ENCODE measurements at regions of chr3 and their contacts with region 1.

Region 1: GRCh38 chr3:69691860-69692259 is 47.4 kb upstream of the MITF start:
- DNase-seq: no peak
- H3K4me3 Mint-ChIP-seq: no peak overlapping the region
- H3K27ac Mint-ChIP-seq: no peak overlapping the region
- H3K4me1 Mint-ChIP-seq: peaks cover 6% of the 10 kb centered on the region
- H3K27me3 Mint-ChIP-seq: no peaks in the 10 kb centered on the region
- CTCF ChIP-seq: no peak

Region 2: GRCh38 chr3:69739204-69740102 is 47.6 kb after region 1 on chr3 and contains the start of gene MITF:
- CTCF ChIA-PET with region 1: interaction called, 9 read pairs
- POLR2A ChIA-PET with region 1: interaction called, 20 read pairs
- intact Hi-C with region 1: loop called (anchors 1 kb)
- DNase-seq: peak; percentile 93
- H3K4me3 Mint-ChIP-seq: peak within 1 kb of the TSS; percentile 75
- H3K27ac Mint-ChIP-seq: peak within 1 kb of the TSS; percentile 70
- H3K4me1 Mint-ChIP-seq: peaks cover 13% of the 10 kb centered on the region
- H3K27me3 Mint-ChIP-seq: peaks cover 16% of the 10 kb centered on the region
- CTCF ChIP-seq: no peak
- total RNA-seq, gene MITF: 7.4 and 16.1 TPM in 2 replicates

Region 3: DNA sequence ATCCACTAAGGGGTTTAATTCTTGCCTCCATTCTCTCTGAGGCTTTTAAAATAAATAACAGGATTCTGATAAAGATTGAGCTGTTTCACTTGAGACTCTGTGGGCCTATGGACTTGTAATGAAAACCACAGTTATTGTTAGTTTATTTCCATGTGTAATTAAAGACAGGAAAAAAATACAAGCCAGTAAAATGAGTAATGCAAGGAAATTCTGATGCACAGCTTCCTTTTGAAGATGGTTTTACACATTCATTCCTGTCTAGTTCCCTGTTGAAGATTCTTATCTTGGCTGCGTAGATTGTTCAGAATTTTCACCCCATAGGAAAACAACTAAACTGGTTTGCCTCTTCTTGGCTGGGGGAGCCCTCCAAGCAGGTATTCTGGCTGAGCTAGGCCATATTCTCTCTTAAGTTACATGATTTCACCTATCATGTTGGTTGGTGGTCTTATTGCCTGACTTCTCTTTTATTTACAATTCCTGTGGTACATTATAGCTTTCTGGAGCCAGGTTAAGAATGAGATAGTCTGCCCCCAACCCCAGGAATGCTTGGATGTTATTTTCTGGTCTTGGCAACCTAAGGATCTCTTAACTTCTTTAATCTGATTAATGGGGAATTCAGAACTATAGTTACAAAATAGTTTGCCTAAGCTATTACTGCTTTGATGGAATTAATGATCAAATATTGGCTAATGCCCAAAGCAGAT is 115.0 kb after region 1 on chr3:
- CTCF ChIA-PET with region 1: interaction called, 12 read pairs
- POLR2A ChIA-PET with region 1: no interaction called
- intact Hi-C with region 1: no loop called
- DNase-seq: no peak
- H3K4me3 Mint-ChIP-seq: no peak overlapping the region
- H3K27ac Mint-ChIP-seq: no peak overlapping the region
- H3K4me1 Mint-ChIP-seq: peaks cover 6% of the 10 kb centered on the region
- H3K27me3 Mint-ChIP-seq: no peaks in the 10 kb centered on the region
- CTCF ChIP-seq: no peak

Region 4: GRCh38 chr3:69948246-69948862 is 256.5 kb after region 1 on chr3:
- CTCF ChIA-PET with region 1: interaction called, 99 read pairs
- POLR2A ChIA-PET with region 1: no interaction called
- intact Hi-C with region 1: loop called (anchors 1 kb)
- DNase-seq: peak; percentile 59
- H3K4me3 Mint-ChIP-seq: no peak overlapping the region
- H3K27ac Mint-ChIP-seq: no peak overlapping the region
- H3K4me1 Mint-ChIP-seq: no peaks in the 10 kb centered on the region
- H3K27me3 Mint-ChIP-seq: no peaks in the 10 kb centered on the region
- CTCF ChIP-seq: peak; percentile 58